PC-9 (cell line): ENCODE measurements at regions of chr16 and their contacts with region 1.

Region 1: DNA sequence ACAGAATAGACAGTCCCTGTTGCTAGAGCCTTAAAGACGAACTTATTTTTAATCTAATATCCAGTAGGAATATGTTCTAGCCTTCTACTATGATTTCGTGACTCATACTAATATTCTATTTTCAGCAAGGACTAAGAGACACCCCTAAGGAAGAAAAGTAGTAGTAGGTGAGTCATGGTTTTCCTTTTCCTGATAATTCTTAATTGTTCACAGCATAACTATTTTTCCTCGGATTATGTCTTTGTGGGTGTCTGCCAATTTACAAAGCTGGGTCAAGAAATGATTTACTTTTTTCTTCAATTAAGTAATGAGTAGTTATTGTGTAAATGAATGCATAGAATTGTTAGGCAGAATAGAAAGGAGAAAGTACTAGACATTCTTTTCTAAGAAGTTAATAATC is 292.2 kb downstream of the TOX3 start:
- DNase-seq: no peak
- H3K4me3 ChIP-seq: no peak overlapping the region
- H3K27ac ChIP-seq: no peak overlapping the region
- H3K4me1 ChIP-seq: no peaks in the 10 kb centered on the region
- H3K27me3 ChIP-seq: peaks cover 8% of the 10 kb centered on the region; the same call in 1 of the 2 replicates
- CTCF ChIP-seq: no peak

Region 2: DNA sequence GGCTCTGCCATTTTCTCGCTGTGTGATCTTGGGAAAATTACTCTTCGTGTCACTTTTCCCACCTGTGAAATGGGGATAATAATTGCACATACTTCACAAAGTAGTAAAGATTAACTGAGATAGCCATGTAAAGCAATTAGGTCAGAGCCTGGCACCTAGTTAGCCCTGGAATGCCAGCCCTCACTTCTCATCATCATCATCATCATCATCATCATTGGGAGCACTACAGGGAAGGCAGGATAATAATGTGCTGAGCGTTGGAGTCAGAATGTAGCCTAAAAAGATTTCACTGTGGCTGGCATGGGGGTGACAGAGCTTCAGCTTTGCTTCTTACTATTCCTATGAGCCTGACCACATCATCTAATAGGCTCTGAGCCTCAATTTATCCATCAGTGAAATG is 70.4 kb before region 1 on chr16:
- CTCF ChIA-PET with region 1: no interaction called
- POLR2A ChIA-PET with region 1: no interaction called
- intact Hi-C with region 1: no loop called
- DNase-seq: no peak
- H3K4me3 ChIP-seq: no peak overlapping the region
- H3K27ac ChIP-seq: no peak overlapping the region
- H3K4me1 ChIP-seq: no peaks in the 10 kb centered on the region
- H3K27me3 ChIP-seq: peaks cover 18% of the 10 kb centered on the region
- CTCF ChIP-seq: no peak

Region 3: GRCh38 chr16:52227851-52228250 is 26.9 kb before region 1 on chr16:
- CTCF ChIA-PET with region 1: no interaction called
- POLR2A ChIA-PET with region 1: no interaction called
- intact Hi-C with region 1: loop called (anchors 2 kb)
- DNase-seq: no peak
- H3K4me3 ChIP-seq: no peak overlapping the region
- H3K27ac ChIP-seq: no peak overlapping the region
- H3K4me1 ChIP-seq: no peaks in the 10 kb centered on the region
- H3K27me3 ChIP-seq: no peaks in the 10 kb centered on the region
- CTCF ChIP-seq: no peak

Region 4: GRCh38 chr16:52372313-52372712 is 117.6 kb after region 1 on chr16:
- CTCF ChIA-PET with region 1: no interaction called
- POLR2A ChIA-PET with region 1: no interaction called
- intact Hi-C with region 1: no loop called
- DNase-seq: no peak
- H3K4me3 ChIP-seq: no peak overlapping the region
- H3K27ac ChIP-seq: no peak overlapping the region
- H3K4me1 ChIP-seq: no peaks in the 10 kb centered on the region
- H3K27me3 ChIP-seq: no peaks in the 10 kb centered on the region; the same call in 1 of the 2 replicates
- CTCF ChIP-seq: no peak